ENCODE measurements at regions of chr14 and their contacts with region 1.

Region 1: GRCh38 chr14:38873941-38874612 is 229.0 kb downstream of the SEC23A start:
- DNase-seq: no peak
- H3K4me3 ChIP-seq: no peak overlapping the region
- CTCF ChIP-seq: no peak
- POLR2A ChIP-seq: no peak

Region 2: GRCh38 chr14:37573356-37573755 is 1300.7 kb before region 1 on chr14:
- intact Hi-C with region 1: loop called (anchors 5 kb)
- DNase-seq: no peak
- H3K4me3 ChIP-seq: no peak overlapping the region
- CTCF ChIP-seq: no peak
- POLR2A ChIP-seq: no peak

Measured in lower leg skin (tissue), 4 donors.